ENCODE measurements at regions of chr5 and their contacts with region 1.

Region 1: DNA sequence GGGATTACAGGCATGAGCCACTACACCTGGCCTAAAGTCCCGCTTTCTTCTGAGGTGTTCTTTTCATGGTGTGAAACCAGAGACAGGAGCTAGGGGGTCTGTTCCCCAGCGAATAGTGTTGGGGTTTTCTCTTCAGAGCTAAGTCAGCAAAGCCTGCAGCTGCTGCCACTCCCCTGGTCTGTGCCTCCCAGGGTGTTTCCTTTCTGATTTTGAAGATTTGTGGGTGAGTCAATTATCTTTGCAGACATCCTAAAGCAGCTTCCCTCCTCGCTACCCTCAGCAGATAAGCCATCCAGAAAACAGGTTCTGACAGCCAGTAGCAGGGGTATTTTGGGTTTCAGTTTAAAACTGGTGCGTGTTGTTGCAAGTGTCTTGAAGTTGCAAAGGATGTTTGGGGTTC is 72.0 kb upstream of the IQGAP2 start:
- DNase-seq: peak in 2 of 4 experiments; percentile 37 to 50
- ATAC-seq: peak; percentile 39
- H3K4me3 ChIP-seq: no peak overlapping the region
- H3K27ac ChIP-seq: no peak overlapping the region
- H3K4me1 ChIP-seq: peaks cover 12 to 16% of the 10 kb centered on the region in 2 experiments
- H3K27me3 ChIP-seq: peaks cover 6 to 13% of the 10 kb centered on the region in 2 experiments; a peak in 2 of 5 replicates
- CTCF ChIP-seq: no peak
- EP300 ChIP-seq: peak; percentile 49; the same call in 1 of the 2 replicates
- POLR2A ChIP-seq: no peak
- RAD21 ChIP-seq: no peak; a peak in 1 of 4 replicates

Region 2: DNA sequence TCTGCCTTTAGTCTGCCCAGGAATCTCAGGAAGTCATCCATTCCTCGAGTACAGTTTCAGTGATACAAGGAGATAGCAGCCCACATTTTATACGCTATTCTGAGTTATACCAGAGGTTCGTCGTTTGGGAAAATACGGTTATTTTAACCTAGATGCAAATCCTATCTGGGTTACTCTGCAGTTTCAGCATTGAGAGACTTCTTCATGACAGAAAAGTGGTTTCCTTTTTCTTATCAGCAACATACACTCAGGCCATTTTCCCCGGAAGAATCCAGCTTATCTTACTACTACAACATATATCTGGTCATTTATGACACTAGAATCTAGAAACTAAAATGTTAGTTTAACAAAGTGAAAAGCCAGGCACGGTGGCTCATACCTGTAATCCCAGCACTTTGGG is 11.5 kb before region 1 on chr5:
- CTCF ChIA-PET with region 1: no interaction called
- POLR2A ChIA-PET with region 1: interaction called, 12 read pairs
- in situ Hi-C with region 1: no loop called
- intact Hi-C with region 1: no loop called
- DNase-seq: peak; percentile 59 to 84 (median 72)
- ATAC-seq: peak; percentile 93
- H3K4me3 ChIP-seq: no peak overlapping the region
- H3K27ac ChIP-seq: peak overlapping the region; percentile 69
- H3K4me1 ChIP-seq: peaks cover 11 to 21% of the 10 kb centered on the region in 2 experiments; a peak in 4 of 5 replicates
- H3K27me3 ChIP-seq: no peaks in the 10 kb centered on the region
- CTCF ChIP-seq: no peak
- EP300 ChIP-seq: peak; percentile 96
- POLR2A ChIP-seq: no peak
- RAD21 ChIP-seq: 0 out of 4 replicates have a peak, but pooled peaks of 1 of the 2 experiments have one; percentile 9

Region 3: GRCh38 chr5:76372323-76373054 is 41.4 kb after region 1 on chr5:
- CTCF ChIA-PET with region 1: no interaction called
- POLR2A ChIA-PET with region 1: no interaction called
- in situ Hi-C with region 1: no loop called
- intact Hi-C with region 1: loop called (anchors 5 kb)
- DNase-seq: peak; percentile 79 to 91 (median 84)
- ATAC-seq: peak; percentile 90
- H3K4me3 ChIP-seq: no peak overlapping the region
- H3K27ac ChIP-seq: peak overlapping the region; percentile 88; the same call in 2 of the 3 replicates
- H3K4me1 ChIP-seq: peaks cover 24 to 48% of the 10 kb centered on the region in 2 experiments
- H3K27me3 ChIP-seq: no peaks in the 10 kb centered on the region
- CTCF ChIP-seq: no peak
- EP300 ChIP-seq: peak; percentile 95
- POLR2A ChIP-seq: no peak; the same call in 1 of the 2 replicates
- RAD21 ChIP-seq: peak in 1 of 2 experiments; percentile 34; a peak in 1 of 4 replicates